Vagina (tissue), 2 donors: ENCODE measurements at regions of chr5 and their contacts with region 1.

Region 1: GRCh38 chr5:68953875-68954617 is 139.8 kb upstream of the SLC30A5 start:
- DNase-seq: no peak
- H3K4me3 ChIP-seq: no peak overlapping the region
- H3K27ac ChIP-seq: peak overlapping the region; percentile 25
- H3K4me1 ChIP-seq: peaks cover 33% of the 10 kb centered on the region
- H3K27me3 ChIP-seq: no peaks in the 10 kb centered on the region
- CTCF ChIP-seq: no peak
- POLR2A ChIP-seq: no peak

Region 2: GRCh38 chr5:68460147-68460798 is 493.8 kb before region 1 on chr5:
- intact Hi-C with region 1: loop called (anchors 10 kb)
- DNase-seq: no peak
- H3K4me3 ChIP-seq: no peak overlapping the region
- H3K27ac ChIP-seq: no peak overlapping the region
- H3K4me1 ChIP-seq: no peaks in the 10 kb centered on the region
- H3K27me3 ChIP-seq: no peaks in the 10 kb centered on the region
- CTCF ChIP-seq: peak; percentile 2 to 59 (median 47)
- POLR2A ChIP-seq: no peak

Region 3: GRCh38 chr5:68652534-68652965 is 301.5 kb before region 1 on chr5:
- intact Hi-C with region 1: loop called (anchors 10 kb)
- DNase-seq: no peak
- H3K4me3 ChIP-seq: no peak overlapping the region
- H3K27ac ChIP-seq: peak overlapping the region; percentile 57
- H3K4me1 ChIP-seq: peaks cover 45% of the 10 kb centered on the region
- H3K27me3 ChIP-seq: no peaks in the 10 kb centered on the region
- CTCF ChIP-seq: no peak
- POLR2A ChIP-seq: no peak

Region 4: DNA sequence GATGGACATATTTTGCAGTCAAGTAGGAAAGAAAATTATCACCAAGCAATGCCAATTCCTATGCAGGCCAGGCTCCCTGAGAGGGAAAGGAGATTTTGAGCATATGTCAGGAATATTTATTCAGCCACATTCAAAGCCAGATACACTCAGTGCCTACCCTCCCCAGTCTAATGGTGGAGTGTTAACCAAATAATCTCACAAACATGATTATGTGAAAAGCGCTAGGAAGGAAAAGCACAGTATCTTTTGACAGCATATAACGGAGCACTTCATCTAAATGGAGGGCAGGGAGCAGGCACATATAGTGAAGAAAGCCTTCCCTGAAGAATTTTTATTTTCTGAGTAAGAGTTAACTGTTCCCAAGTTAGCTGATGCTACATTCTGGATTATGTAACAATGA is 59.4 kb after region 1 on chr5:
- intact Hi-C with region 1: no loop called
- DNase-seq: no peak
- H3K4me3 ChIP-seq: no peak overlapping the region
- H3K27ac ChIP-seq: no peak overlapping the region
- H3K4me1 ChIP-seq: no peaks in the 10 kb centered on the region
- H3K27me3 ChIP-seq: no peaks in the 10 kb centered on the region
- CTCF ChIP-seq: no peak
- POLR2A ChIP-seq: no peak